ENCODE measurements at regions of chr1 and their contacts with region 1.

Region 1: DNA sequence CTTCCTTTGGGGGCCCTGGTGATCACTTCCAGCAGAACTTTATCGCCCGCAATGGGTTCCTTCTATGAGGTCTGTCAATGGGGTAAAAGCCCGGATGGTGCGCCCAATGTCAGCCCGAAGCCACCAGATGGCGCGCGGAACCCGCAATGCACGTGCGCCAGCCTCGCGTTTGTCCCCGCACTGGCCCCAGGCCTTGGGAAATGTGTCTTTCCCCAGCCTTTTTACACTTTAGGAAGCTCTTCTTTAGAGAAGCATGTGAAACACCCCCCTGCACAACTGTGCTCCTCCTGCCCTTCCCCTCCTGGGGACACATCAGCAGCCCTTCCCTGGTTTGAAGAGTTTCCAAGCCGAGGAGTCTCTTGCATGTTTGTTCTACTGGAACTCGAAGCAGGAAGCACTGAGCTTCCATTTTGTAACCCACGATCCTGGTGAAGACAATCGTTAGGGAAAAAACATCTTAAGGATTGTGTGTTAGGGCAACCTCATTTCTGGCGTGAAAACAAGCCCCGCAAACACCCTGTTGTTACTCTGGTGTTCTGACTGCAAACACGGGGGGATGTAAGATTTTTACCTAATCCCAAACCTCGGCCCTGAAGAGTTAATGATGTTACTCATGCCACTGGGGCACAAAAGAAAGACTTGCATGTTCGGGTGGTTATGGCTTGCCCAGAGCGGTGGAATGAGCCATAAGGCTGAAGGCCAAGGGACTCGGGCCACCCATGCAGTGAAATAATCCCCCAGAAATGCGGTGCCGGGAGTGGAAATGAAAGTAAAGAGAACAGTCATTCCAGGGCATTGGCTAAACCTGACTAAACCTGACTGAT is 20.4 kb upstream of the TARBP1 start:
- DNase-seq: peak; percentile 96
- H3K4me3 ChIP-seq: peak overlapping the region in 2 of 8 donors; percentile 3 to 49
- H3K27ac ChIP-seq: peak overlapping the region in 7 of 8 donors; percentile 61 to 81 (median 73)
- H3K4me1 ChIP-seq: peaks cover 6 to 31% (median 23%) of the 10 kb centered on the region in 6 donors
- H3K27me3 ChIP-seq: no peaks in the 10 kb centered on the region
- CTCF ChIP-seq: peak; percentile 81 to 95 (median 93)
- POLR2A ChIP-seq: no peak

Region 2: GRCh38 chr1:234599617-234600417 is 100.5 kb after region 1 on chr1:
- intact Hi-C with region 1: loop called (anchors 5 kb)
- DNase-seq: peak; percentile 95
- H3K4me3 ChIP-seq: peak overlapping the region; percentile 50 to 72 (median 58)
- H3K27ac ChIP-seq: peak overlapping the region; percentile 91 to 100 (median 100)
- H3K4me1 ChIP-seq: peaks cover 56 to 71% (median 63%) of the 10 kb centered on the region in 6 donors
- H3K27me3 ChIP-seq: no peaks in the 10 kb centered on the region
- CTCF ChIP-seq: peak in 3 of 11 experiments; percentile 6 to 35 (median 12)
- POLR2A ChIP-seq: peak in 2 of 3 donors; percentile 22 to 78